MCF 10A (cell line): ENCODE measurements at regions of chr6 and their contacts with region 1.

Region 1: GRCh38 chr6:72622094-72622940 is 453 bp downstream of the KCNQ5 start:
- DNase-seq: peak; percentile 54
- H3K4me3 Mint-ChIP-seq: peak overlapping the region; percentile 93
- H3K27ac Mint-ChIP-seq: peak overlapping the region; percentile 86
- H3K4me1 Mint-ChIP-seq: peaks cover 10% of the 10 kb centered on the region
- H3K27me3 Mint-ChIP-seq: no peaks in the 10 kb centered on the region
- CTCF ChIP-seq: peak; percentile 18

Region 2: DNA sequence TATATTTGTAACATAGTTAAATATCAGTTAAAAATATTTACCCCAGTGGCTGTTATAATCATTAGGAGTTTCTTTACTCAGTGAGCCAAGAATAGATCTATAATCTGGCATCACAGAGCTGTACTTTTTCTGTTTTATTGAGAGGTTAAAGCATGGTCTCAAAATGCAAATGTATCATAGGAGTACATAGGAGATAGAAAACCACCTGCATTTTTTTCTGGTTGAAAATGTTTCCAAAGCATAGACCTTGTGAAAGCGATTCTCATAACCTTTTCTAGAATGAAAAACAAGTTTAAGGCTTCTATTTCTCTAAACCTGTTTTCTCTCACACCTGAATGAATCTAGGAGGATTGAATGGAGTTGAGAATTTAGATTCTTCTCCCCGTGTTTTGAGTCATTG is 13.9 kb after region 1 on chr6:
- CTCF ChIA-PET with region 1: interaction called, 11 read pairs
- POLR2A ChIA-PET with region 1: no interaction called
- intact Hi-C with region 1: no loop called
- DNase-seq: no peak
- H3K4me3 Mint-ChIP-seq: no peak overlapping the region
- H3K27ac Mint-ChIP-seq: no peak overlapping the region
- H3K4me1 Mint-ChIP-seq: peaks cover 5% of the 10 kb centered on the region
- H3K27me3 Mint-ChIP-seq: no peaks in the 10 kb centered on the region
- CTCF ChIP-seq: no peak

Region 3: DNA sequence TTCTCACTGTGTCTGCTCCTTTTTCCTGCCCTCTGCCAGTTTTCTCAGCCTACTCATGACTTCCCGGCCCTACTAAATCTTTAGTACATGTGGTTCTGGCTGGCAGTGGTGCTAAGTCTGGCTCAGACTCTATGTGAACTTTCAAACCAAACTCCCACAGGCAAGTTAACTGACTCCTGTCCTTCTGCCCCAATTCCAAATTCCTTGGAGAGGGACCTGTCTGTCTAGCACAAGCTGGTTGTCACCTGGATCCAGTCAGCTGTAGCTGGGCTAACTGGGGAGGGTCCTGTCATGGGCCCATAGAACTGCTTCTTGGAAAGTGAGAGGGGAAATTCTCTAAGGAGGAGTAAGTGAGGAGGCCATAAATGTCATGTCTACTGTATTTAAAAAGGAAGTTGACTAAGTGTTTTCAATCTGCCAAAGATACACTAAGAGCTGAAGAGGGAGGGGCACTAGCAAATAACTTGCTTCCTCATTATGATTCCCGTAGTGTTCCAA is 239.7 kb after region 1 on chr6:
- CTCF ChIA-PET with region 1: no interaction called
- POLR2A ChIA-PET with region 1: no interaction called
- intact Hi-C with region 1: loop called (anchors 10 kb)
- DNase-seq: peak; percentile 27
- H3K4me3 Mint-ChIP-seq: peak overlapping the region; percentile 3
- H3K27ac Mint-ChIP-seq: peak overlapping the region; percentile 66
- H3K4me1 Mint-ChIP-seq: peaks cover 9% of the 10 kb centered on the region
- H3K27me3 Mint-ChIP-seq: no peaks in the 10 kb centered on the region
- CTCF ChIP-seq: no peak

Region 4: DNA sequence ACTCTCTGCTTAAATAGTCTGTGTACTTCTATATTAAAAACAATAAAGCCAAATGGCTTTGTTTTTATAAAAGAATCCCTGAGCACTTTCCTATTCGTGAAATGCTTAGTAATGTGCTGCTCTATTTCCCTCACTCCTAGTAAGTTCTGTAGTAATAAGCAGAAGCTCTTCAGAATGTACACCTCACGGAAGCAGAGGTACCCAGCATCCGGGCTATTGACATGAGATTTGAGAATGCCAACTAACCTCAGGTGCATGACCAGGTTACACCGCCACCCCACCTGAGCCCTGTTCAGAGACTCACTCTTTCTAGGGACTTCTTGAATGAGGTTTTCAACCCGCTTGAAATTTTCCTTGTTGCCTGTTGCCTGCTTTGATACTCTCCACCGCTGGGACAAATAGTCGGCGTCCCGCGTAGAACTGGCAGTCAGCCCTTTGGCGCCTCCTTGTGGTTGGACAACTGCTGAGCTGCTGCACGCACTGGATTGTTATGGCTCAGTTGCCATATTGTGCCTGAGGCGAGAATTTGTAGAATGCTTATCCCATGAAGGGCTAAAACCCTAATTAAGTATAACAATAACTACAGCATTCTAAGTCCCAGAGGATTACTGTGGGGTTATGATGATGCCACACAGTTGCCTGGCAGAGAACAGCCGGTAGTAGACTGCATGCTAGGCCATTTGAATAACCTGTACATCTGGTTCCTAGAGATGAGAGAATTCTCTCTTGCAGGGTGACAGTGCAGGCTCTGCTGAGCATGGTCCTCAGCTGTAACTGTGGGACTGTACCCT is 507.5 kb after region 1 on chr6:
- CTCF ChIA-PET with region 1: interaction called, 340 read pairs
- POLR2A ChIA-PET with region 1: interaction called, 16 read pairs
- intact Hi-C with region 1: no loop called
- DNase-seq: peak; percentile 81
- H3K4me3 Mint-ChIP-seq: no peak overlapping the region
- H3K27ac Mint-ChIP-seq: peak overlapping the region; percentile 25
- H3K4me1 Mint-ChIP-seq: no peaks in the 10 kb centered on the region
- H3K27me3 Mint-ChIP-seq: no peaks in the 10 kb centered on the region
- CTCF ChIP-seq: peak; percentile 95

Region 5: DNA sequence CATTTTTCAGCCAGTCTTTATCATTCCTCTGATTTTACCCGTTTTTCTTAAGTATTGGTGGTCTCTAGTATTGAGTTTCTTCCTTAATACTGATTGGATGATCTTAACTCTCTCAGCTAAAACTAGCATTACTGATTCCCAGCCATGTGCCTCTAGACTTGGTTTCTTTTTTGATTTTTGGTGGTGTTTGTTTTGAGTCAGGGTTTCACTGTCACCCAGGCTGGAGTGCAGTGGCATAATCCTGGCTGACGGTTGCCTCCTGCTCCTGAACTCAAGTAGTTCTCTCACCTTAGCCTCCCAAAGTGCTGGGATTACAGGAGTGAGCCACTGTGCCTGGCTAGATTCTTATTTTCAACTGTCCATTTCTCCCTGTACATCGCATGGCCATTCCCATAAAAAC is 706.9 kb after region 1 on chr6:
- CTCF ChIA-PET with region 1: interaction called, 12 read pairs
- POLR2A ChIA-PET with region 1: no interaction called
- intact Hi-C with region 1: loop called (anchors 10 kb)
- DNase-seq: no peak
- H3K4me3 Mint-ChIP-seq: no peak overlapping the region
- H3K27ac Mint-ChIP-seq: no peak overlapping the region
- H3K4me1 Mint-ChIP-seq: peaks cover 5% of the 10 kb centered on the region
- H3K27me3 Mint-ChIP-seq: peaks cover 13% of the 10 kb centered on the region
- CTCF ChIP-seq: no peak